ENCODE measurements at regions of chr14 and their contacts with region 1.

Region 1: DNA sequence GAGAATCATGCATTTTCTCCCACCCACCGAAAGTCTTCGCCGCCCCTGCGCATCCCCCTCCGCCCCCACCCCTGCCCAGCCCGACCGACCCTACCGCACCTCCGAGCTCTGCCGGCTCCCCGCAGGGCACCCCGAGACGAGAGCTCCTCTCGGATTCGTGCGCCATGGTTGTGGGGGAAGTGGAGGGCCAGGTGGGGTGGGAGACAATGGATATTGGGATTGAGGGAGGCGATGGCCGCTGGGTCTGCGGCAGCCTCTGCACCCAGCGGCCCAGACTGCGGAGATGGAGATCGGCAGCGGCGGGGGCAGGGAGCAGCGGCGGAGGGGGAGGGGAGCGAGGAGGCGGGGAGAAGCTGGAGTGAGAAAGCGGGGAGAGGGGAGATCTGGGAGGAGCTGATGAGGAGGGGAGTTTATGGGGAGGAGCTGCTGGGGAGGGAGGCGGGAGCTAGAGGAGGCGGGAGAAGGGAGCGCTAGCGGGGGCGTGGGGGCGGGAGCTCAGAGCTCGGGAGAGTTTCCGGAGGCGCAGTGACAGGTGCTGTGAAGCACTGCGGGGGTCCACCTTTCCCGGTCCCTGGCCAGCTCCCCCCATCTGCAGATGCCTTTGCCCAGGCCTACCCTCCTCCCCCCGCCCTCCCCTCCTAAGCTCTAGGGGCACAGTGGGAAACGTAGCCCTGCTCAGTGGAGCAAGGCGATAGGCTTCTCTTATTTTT is at the start of gene SALL2:
- DNase-seq: peak; percentile 66
- ATAC-seq: peak; percentile 87
- H3K4me3 Mint-ChIP-seq: peak within 1 kb of the TSS; percentile 70
- H3K27ac Mint-ChIP-seq: no peak within 1 kb of the TSS
- H3K4me1 Mint-ChIP-seq: peaks cover 9% of the 10 kb centered on the region
- H3K27me3 Mint-ChIP-seq: peaks cover 11% of the 10 kb centered on the region
- total RNA-seq, gene SALL2: 1.3 to 1.5 TPM

Region 2: GRCh38 chr14:21557084-21557901 is 31.2 kb after region 1 on chr14:
- CTCF ChIA-PET with region 1: interaction called, 11 read pairs
- DNase-seq: peak; percentile 83
- ATAC-seq: peak; percentile 58
- H3K4me3 Mint-ChIP-seq: peak overlapping the region; percentile 32
- H3K27ac Mint-ChIP-seq: peak overlapping the region; percentile 56
- H3K4me1 Mint-ChIP-seq: peaks cover 6% of the 10 kb centered on the region
- H3K27me3 Mint-ChIP-seq: no peaks in the 10 kb centered on the region